ENCODE measurements at regions of chr4 and their contacts with region 1.

Region 1: GRCh38 chr4:36399762-36400353 is 118.4 kb downstream of the DTHD1 start:
- DNase-seq: peak; percentile 19
- CTCF ChIP-seq: peak; percentile 82

Region 2: DNA sequence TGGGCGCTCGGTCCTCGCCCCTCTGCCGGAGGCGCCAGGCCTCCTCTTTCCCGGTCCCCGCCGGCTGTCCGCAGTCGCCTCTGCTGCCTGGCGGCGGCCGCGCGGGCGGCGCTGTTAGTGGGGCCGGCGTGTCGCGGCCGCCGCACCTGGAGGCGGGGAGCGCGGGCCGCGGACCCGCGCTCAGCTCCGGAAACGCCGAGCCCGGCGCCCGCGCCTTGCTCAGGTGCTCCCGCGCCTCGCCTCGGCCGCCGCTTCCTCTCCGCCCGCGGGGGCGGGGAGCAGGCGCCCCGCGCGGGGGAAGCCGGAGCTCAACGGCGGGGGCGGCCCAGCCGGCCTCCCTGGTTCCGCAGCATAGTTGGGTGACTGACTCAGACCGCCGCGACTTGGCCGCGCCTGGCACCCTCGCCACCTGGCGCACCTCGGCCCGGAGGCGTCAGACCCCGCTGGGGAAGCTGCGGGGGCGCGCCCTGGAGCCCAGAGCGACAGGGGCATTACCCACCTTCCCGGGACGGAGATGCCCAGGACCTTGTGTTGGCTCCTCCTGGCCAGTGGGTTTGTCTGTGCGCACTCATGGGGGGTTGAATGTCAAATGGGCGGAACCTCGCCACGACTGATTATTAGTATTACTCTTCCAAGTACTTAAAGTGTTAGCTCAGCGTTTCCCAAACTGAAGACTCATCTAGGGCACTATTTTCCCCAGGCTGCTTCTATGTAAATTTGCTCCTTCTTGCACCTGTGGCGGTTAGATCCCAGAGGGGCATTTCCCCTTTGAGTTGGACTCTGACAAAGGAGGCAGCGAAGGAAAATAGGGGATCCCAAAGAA is 155.4 kb before region 1 on chr4 and contains the start of gene ARAP2:
- CTCF ChIA-PET with region 1: interaction called, 27 read pairs
- POLR2A ChIA-PET with region 1: no interaction called
- DNase-seq: peak; percentile 82
- CTCF ChIP-seq: peak; percentile 18

Region 3: GRCh38 chr4:36303426-36304137 is 96.3 kb before region 1 on chr4:
- CTCF ChIA-PET with region 1: no interaction called
- POLR2A ChIA-PET with region 1: no interaction called
- DNase-seq: no peak
- CTCF ChIP-seq: no peak

Region 4: DNA sequence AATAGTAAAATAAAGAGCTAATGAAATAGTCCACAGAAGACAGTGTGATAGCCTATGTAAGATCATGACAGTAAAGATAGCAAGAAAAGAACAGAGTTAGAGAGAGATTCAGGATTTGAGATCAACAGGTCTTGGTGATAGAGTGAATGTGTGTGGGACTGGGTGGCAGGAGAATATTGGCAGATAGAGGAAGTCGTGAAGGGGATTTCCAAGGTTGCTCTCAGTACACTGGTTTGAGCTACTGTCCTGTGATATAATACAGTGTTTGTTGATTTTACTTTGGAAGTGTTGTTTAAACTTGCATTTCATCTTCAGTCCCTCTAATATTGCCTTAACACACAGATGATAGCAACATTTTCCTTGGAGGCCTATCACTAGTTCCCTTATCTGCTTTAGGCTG is 74.4 kb before region 1 on chr4:
- CTCF ChIA-PET with region 1: interaction called, 11 read pairs
- POLR2A ChIA-PET with region 1: no interaction called
- DNase-seq: peak; percentile 37
- CTCF ChIP-seq: no peak

Region 5: GRCh38 chr4:36343501-36344175 is 56.2 kb before region 1 on chr4:
- CTCF ChIA-PET with region 1: interaction called, 54 read pairs
- POLR2A ChIA-PET with region 1: no interaction called
- DNase-seq: no peak
- CTCF ChIP-seq: no peak

Region 6: DNA sequence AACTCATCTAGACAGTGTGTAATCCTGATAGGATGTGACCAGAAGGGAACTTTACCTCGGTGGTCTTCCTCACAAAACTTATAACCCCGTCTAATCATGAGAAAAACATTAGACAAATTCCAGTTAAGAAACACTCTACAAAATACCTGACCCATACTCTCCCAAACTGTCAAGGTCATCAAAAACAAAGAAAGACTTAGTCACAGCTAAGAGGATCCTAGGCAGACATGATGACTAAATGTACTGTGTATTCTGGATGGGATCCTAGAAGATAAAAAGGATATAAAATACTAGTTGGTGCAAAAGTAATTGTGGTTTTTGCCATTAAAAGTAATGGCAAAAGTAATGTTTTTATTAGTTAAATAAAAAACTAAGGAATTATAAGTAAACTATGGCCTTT is 36.8 kb before region 1 on chr4:
- CTCF ChIA-PET with region 1: interaction called, 44 read pairs
- POLR2A ChIA-PET with region 1: no interaction called
- DNase-seq: no peak
- CTCF ChIP-seq: no peak

Region 7: GRCh38 chr4:36385951-36386571 is 13.8 kb before region 1 on chr4:
- CTCF ChIA-PET with region 1: interaction called, 34 read pairs
- POLR2A ChIA-PET with region 1: no interaction called
- DNase-seq: peak; percentile 25
- CTCF ChIP-seq: no peak

Measured in GM10248 (cell line).